Left ventricle myocardium inferior (tissue), 1 donor: ENCODE measurements at regions of chr18 and their contacts with region 1.

Region 1: GRCh38 chr18:54119524-54120019 is 104.9 kb downstream of the MBD2 start:
- DNase-seq: no peak
- H3K4me3 ChIP-seq: peak overlapping the region; percentile 18
- H3K27ac ChIP-seq: no peak overlapping the region
- H3K4me1 ChIP-seq: peaks cover 3% of the 10 kb centered on the region
- H3K27me3 ChIP-seq: no peaks in the 10 kb centered on the region
- CTCF ChIP-seq: peak; percentile 81

Region 2: DNA sequence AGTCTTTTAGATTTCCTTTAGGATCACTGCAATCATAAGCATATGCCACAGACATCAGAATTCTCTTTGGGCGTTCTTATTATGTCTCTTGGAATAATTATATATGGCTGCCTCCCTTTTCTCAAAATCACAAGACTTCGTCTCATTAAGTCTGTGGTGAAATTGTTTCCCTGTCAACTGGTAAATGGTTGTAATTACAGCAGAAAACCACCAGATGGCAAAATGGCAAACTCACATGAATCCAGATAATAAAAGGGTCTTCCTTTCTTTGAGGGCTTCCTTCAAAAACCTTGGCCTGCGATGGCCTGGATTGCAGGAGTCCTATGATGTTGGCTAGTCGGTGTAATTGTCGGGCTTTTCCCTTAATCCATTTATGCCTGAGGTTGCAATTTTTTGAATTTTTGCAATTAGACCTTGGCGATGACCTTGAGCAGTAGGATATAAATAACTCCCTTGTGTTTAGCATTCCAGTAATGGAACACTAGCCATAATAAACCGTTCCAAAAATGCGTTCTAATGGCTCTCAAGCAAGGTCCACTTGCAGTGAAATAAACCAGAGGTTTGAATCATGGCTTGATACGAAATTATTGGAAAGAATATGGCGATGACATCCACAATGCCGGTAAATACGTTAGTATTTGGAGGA is 551.5 kb before region 1 on chr18:
- intact Hi-C with region 1: loop called (anchors 10 kb)
- DNase-seq: no peak
- H3K4me3 ChIP-seq: no peak overlapping the region
- H3K27ac ChIP-seq: peak overlapping the region; percentile 27
- H3K4me1 ChIP-seq: peaks cover 11% of the 10 kb centered on the region
- H3K27me3 ChIP-seq: no peaks in the 10 kb centered on the region
- CTCF ChIP-seq: peak; percentile 67

Region 3: GRCh38 chr18:53701697-53702096 is 417.9 kb before region 1 on chr18:
- intact Hi-C with region 1: loop called (anchors 10 kb)
- DNase-seq: no peak
- H3K4me3 ChIP-seq: no peak overlapping the region
- H3K27ac ChIP-seq: no peak overlapping the region
- H3K4me1 ChIP-seq: no peaks in the 10 kb centered on the region
- H3K27me3 ChIP-seq: no peaks in the 10 kb centered on the region
- CTCF ChIP-seq: no peak

Region 4: DNA sequence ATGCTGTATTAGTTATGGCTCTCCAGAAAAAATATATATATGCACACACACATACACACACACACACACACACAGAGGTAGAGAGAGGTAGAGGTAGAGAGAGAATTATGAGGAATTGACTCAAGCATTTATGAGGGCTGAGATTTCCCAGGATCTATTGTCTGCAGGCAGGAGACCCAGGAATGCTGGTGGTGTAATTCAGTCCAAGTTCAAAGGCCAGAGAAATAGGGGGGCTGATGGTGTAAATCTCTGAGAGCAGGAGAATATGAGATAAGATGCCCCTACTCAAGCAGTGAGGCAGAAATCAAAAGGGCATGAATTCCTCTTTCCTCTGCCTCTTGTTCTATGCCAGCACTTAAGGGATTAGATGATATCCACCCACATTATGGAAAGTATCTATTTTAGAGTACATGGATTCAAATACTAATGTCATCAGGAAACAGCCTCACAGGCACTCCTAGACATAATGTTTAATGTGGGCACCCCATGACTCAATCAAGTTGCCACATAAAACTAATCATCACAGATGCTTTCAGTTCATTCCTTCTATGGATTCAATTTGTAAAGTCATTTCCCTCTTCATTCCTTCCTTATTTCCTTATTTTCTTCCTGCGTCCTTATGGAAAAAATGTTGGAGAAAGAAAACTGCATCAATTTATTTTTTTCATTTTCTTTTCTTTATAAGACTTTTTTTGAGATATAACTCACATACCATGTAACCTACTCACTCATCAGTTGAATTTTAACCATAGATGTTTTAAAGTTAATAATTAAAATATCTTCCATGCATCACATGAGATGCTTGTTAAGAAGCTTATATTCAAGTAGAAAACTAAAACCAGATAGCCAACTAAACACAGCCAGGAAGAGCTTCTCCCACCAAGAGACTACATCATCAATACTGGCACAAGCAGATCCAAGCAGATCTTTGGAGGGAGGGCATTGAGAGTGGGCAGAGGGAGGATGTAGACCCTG is 301.3 kb before region 1 on chr18:
- intact Hi-C with region 1: no loop called
- DNase-seq: no peak
- H3K4me3 ChIP-seq: no peak overlapping the region
- H3K27ac ChIP-seq: no peak overlapping the region
- H3K4me1 ChIP-seq: no peaks in the 10 kb centered on the region
- H3K27me3 ChIP-seq: no peaks in the 10 kb centered on the region
- CTCF ChIP-seq: no peak